ENCODE measurements at regions of chr4 and their contacts with region 1.

Region 1: DNA sequence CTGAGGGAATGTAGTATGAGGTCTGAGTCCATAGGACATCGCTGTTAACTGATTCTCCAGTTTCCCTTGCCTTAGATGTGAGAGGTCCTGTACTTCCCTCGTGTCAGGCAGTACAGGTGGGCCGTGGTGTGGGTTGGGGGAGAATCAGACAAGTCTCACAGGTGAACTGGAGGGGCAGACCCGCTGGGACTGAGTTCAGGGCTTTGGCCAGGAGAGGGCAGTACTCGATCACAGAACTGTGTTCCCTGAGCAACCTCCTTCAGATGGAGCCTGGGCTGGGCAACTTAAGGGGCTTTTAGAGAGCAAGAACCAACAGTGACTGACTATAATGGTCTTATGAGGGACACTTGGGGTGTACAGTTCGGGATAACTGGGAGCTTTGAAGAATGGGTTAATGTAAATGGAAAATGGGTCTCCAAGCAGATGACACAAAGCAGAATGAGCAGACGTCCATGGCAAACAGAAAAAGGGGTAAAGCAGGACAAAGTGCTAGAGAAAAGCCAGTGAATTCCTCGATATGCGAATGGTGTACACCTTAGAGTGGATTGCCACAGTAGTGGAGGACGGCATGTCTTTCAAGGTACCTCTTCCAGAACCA is 83.6 kb downstream of the CCNG2 start:
- DNase-seq: peak; percentile 84
- H3K4me3 Mint-ChIP-seq: no peak overlapping the region
- H3K27ac Mint-ChIP-seq: no peak overlapping the region
- H3K4me1 Mint-ChIP-seq: no peaks in the 10 kb centered on the region
- H3K27me3 Mint-ChIP-seq: peaks cover 12% of the 10 kb centered on the region

Region 2: GRCh38 chr4:77284036-77284435 is 43.5 kb after region 1 on chr4:
- intact Hi-C with region 1: no loop called
- DNase-seq: no peak
- H3K4me3 Mint-ChIP-seq: no peak overlapping the region
- H3K27ac Mint-ChIP-seq: no peak overlapping the region
- H3K4me1 Mint-ChIP-seq: no peaks in the 10 kb centered on the region
- H3K27me3 Mint-ChIP-seq: peaks cover 4% of the 10 kb centered on the region

Region 3: DNA sequence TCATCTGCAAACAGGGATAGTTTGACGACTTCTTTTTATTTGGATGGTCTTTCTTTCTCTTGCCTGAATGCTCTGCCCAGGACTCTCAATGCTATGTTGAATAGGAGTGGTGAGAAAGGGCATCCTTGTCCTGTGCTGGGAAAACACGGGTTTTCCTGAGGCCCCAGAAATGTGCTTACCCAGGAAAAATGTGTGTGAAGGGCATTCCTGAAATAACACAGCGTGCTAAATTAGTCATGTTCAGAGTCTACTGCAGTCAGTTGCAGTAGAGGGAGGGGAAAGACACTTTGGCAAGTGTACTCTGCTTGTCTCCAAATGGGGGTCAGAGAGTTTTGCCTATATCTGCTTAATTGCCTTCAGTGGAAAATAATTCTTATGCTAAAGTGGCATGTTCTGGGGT is 70.4 kb after region 1 on chr4:
- intact Hi-C with region 1: loop called (anchors 2 kb)
- DNase-seq: no peak
- H3K4me3 Mint-ChIP-seq: no peak overlapping the region
- H3K27ac Mint-ChIP-seq: no peak overlapping the region
- H3K4me1 Mint-ChIP-seq: no peaks in the 10 kb centered on the region
- H3K27me3 Mint-ChIP-seq: peaks cover 10% of the 10 kb centered on the region

Region 4: DNA sequence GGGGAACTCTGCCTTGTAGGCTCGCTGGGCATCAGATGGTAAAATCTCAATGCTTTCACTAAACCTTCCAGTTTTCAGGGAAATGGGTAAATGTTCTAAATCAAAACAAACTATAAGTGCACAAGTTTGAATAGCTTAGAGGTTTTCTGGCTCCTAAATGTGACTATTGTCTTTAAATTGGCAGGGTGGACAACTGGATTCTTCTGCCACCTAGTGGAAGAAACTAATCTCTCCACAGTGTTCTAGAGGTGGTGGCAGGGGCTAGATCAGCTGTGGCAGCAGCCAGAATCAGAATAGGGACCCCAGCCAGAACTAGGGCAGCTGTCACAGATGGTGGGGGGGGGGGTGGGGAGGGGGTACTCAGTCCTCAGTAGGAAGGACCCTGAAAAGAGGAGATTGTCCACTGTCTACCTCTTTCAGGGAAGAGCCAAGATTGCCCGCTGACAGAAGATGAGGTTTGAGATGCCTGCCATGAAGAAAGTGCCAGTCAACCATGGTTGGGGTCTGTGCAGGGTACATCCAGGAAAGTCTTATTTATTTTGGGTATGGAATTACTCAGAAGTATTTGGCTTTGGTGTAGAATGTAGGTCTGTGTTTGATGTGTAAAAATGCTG is 117.9 kb after region 1 on chr4:
- intact Hi-C with region 1: loop called (anchors 1 kb)
- DNase-seq: peak; percentile 65
- H3K4me3 Mint-ChIP-seq: no peak overlapping the region
- H3K27ac Mint-ChIP-seq: no peak overlapping the region
- H3K4me1 Mint-ChIP-seq: no peaks in the 10 kb centered on the region
- H3K27me3 Mint-ChIP-seq: peaks cover 3% of the 10 kb centered on the region

Measured in activated CD4-positive, alpha-beta T cell treated with anti-CD3 and anti-CD28 coated beads, Interleukin-2, amount 10 ng/mL, durations not matched to agents 24 days and 14 days (primary cell).